ENCODE measurements at regions of chr1 and their contacts with region 1.

Region 1: DNA sequence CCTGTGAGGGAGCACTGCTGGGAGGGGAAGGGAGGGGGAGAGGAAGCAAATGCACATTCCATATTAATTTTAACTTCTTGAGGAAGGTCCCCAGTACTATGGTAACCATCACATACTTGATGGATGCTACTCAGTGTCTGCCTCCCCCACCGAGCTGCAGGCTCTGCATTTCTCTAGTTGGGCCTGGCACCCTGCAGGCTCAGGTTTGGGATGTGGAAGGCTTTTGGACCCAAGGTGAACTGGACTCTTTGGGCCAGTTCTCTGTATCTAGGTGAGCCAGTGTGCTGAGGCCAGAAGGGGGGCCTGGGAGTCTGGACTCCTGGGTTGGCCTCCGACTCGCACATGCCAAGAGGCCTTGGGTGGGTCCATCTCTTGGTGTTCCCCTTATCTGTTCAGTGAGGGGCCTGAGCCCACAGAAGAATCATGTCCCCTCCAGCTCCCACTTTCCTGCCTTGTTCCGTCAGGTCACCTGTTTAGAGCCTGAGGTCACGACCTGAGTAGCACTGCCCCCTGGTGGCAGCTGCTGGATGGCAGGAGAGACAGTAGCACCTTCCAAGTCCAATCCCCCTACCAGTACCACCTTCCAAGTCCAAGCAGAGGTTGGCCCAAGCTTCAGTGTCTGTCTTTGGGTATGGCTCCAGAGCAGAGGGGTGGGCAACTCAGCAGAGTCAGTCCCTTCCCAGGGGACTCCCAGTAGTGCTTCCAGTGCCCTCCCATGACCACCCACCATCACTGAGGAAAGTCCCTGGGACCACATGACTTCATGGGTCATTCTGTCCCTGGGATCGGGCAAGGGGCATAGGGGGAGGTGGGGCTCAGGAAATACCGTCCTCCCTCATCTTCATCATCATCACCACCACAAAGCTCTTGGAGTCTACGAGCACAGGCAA is 241.8 kb downstream of the TRABD2B start:
- DNase-seq: peak; percentile 73
- CTCF ChIP-seq: peak; percentile 68

Region 2: GRCh38 chr1:47738560-47739182 is 16.7 kb before region 1 on chr1:
- CTCF ChIA-PET with region 1: interaction called, 51 read pairs
- POLR2A ChIA-PET with region 1: no interaction called
- DNase-seq: no peak
- CTCF ChIP-seq: peak; percentile 46

Region 3: DNA sequence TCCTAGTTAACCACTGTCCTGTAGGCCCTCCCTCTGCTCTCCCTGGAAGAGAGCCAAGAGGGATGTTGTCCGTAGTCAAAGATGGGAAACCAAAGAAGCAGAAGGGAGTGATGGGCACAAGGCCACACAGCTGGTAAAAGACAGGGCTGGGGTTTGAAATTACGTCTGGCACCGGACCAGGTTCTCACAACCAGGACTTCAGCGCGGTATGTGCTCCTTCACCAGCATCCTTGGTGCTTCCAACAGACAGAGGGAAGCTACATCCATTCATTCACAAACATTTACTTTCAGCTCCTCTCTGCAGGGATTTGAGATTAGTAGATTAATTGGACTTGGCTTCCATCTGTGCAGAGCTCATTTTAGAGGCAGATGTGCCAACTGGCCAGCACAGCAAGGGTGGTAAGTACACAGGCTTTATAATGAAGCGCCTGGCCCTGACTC is 50.6 kb after region 1 on chr1:
- CTCF ChIA-PET with region 1: no interaction called
- POLR2A ChIA-PET with region 1: no interaction called
- DNase-seq: no peak
- CTCF ChIP-seq: no peak